ENCODE measurements at regions of chr1 and their contacts with region 1.

Region 1: DNA sequence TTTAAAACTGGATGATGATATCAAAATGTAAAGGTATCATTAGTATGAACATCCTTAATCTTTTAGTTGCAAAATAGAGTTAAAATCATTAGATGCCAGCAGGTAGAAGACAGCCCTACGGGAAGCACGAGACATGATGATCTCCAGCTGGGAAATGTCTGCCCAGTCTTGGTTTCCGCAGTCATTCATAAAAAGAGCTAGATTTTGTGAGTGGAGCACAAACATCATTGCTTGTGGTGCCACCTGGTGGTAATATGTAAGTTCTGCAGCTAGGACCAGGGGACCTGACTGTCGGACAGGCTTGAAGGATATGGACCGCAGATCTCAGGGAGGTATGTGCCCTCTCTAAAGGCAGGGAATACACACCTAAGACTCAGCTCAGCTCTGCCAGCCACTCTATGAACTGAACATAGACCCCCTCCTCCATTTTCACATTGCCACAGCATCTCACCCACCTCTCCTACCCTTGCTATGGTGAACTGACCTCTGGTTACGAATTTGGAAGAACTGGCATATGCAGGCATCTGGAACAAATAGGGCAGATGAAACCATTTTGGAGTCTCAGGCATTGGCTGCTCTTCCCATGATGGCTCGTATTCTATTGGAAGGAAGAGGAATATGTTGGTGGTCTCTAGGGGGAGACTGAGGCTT is 9.2 kb downstream of the FCMR start:
- DNase-seq: peak; percentile 59
- H3K4me3 ChIP-seq: no peak overlapping the region
- H3K27ac ChIP-seq: no peak overlapping the region
- H3K4me1 ChIP-seq: peaks cover 22% of the 10 kb centered on the region
- H3K27me3 ChIP-seq: no peaks in the 10 kb centered on the region
- CTCF ChIP-seq: peak; percentile 77 to 81

Region 2: GRCh38 chr1:206489980-206490770 is 422.4 kb before region 1 on chr1:
- CTCF ChIA-PET with region 1: no interaction called
- dilution Hi-C with region 1: no loop called
- in situ Hi-C with region 1: no loop called
- intact Hi-C with region 1: loop called (anchors 1 kb)
- DNase-seq: peak; percentile 47
- H3K4me3 ChIP-seq: no peak overlapping the region
- H3K27ac ChIP-seq: no peak overlapping the region
- H3K4me1 ChIP-seq: no peaks in the 10 kb centered on the region
- H3K27me3 ChIP-seq: no peaks in the 10 kb centered on the region
- CTCF ChIP-seq: peak; percentile 94 to 100

Region 3: GRCh38 chr1:206725109-206725963 is 187.2 kb before region 1 on chr1:
- CTCF ChIA-PET with region 1: no interaction called
- dilution Hi-C with region 1: loop called (anchors 5 kb)
- in situ Hi-C with region 1: loop called in 1 of 2 experiments (anchors 5 kb)
- intact Hi-C with region 1: loop called (anchors 1 kb)
- DNase-seq: no peak
- H3K4me3 ChIP-seq: no peak overlapping the region
- H3K27ac ChIP-seq: no peak overlapping the region
- H3K4me1 ChIP-seq: peaks cover 19% of the 10 kb centered on the region
- H3K27me3 ChIP-seq: no peaks in the 10 kb centered on the region
- CTCF ChIP-seq: peak; percentile 62 to 68

Region 4: DNA sequence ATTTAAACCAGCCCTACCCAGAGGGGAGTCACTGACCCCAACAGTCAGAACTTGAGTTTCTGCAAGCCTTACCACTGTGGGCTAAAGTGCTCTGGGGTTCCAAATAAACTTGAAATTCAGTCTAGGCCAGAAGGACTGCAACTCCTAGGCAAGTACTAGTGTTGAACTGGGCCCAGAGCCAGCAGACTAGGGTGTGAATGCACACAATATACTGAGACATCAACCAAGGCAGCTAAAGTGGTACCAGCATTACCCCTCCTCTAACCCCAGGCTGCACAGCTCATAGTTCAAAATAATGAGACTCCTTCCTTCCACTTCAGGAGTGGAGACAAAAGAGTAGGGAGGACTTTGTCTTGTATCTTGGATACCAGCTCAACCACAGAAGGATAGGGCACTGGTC is 66.1 kb before region 1 on chr1:
- CTCF ChIA-PET with region 1: no interaction called
- dilution Hi-C with region 1: no loop called
- in situ Hi-C with region 1: no loop called
- intact Hi-C with region 1: no loop called
- DNase-seq: no peak
- H3K4me3 ChIP-seq: no peak overlapping the region
- H3K27ac ChIP-seq: no peak overlapping the region
- H3K4me1 ChIP-seq: peaks cover 13% of the 10 kb centered on the region
- H3K27me3 ChIP-seq: no peaks in the 10 kb centered on the region
- CTCF ChIP-seq: no peak

Region 5: DNA sequence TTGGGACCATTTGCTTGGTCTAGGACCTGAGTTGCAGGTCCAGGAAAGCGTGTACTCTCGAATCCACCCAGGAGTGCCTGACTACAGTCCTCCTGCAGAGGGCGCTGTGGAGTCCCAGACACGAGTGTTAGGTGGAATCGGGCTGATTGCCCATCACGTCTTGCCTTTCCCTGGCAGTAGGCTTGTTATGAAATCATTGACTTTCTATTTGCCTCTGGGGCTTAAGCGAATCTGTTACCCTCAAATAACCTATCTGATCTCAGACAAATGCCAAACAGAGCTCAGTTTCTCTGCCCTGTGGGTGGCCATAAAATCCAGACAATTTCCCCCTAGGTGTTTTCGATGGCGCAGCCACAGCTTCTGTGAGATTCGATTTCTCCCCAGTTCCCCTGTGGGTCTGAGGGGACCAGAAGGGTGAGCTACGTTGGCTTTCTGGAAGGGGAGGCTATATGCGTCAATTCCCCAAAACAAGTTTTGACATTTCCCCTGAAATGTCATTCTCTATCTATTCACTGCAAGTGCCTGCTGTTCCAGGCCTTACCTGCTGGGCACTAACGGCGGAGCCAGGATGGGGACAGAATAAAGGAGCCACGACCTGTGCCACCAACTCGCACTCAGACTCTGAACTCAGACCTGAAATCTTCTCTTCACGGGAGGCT is 47.4 kb before region 1 on chr1 and contains the start of gene IL20:
- CTCF ChIA-PET with region 1: interaction called, 8 read pairs
- dilution Hi-C with region 1: loop called (anchors 5 kb)
- in situ Hi-C with region 1: loop called in 1 of 2 experiments (anchors 5 kb)
- intact Hi-C with region 1: loop called (anchors 1 kb)
- DNase-seq: peak; percentile 78
- H3K4me3 ChIP-seq: no peak within 1 kb of the TSS
- H3K27ac ChIP-seq: no peak within 1 kb of the TSS
- H3K4me1 ChIP-seq: peaks cover 34% of the 10 kb centered on the region
- H3K27me3 ChIP-seq: no peaks in the 10 kb centered on the region
- CTCF ChIP-seq: peak; percentile 98 to 99
- total RNA-seq, gene IL20: not detected

Region 6: DNA sequence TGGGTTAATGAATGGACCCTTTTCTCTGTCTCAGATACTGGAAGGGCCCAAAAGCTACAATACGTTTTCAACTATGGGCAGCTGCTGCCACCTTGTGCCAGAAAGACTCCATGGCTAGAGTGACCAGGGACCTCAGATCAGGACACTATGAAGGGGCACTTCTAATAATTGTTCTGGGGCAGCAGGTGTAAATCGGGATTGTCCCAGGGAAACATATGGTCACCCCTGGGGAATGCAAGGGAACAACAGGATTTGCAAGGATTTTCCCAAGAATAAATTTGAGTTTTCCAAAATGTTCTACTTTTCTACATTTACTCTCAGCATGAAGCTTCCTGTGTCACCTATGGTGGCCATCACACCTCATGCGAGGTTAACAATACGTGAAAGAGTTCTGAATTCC is 69.6 kb after region 1 on chr1:
- CTCF ChIA-PET with region 1: interaction called, 4 read pairs
- dilution Hi-C with region 1: no loop called
- in situ Hi-C with region 1: loop called in 1 of 2 experiments (anchors 5 kb)
- intact Hi-C with region 1: loop called (anchors 1 kb)
- DNase-seq: peak; percentile 33
- H3K4me3 ChIP-seq: no peak overlapping the region
- H3K27ac ChIP-seq: no peak overlapping the region
- H3K4me1 ChIP-seq: no peaks in the 10 kb centered on the region
- H3K27me3 ChIP-seq: no peaks in the 10 kb centered on the region
- CTCF ChIP-seq: peak; percentile 82 to 83

Region 7: DNA sequence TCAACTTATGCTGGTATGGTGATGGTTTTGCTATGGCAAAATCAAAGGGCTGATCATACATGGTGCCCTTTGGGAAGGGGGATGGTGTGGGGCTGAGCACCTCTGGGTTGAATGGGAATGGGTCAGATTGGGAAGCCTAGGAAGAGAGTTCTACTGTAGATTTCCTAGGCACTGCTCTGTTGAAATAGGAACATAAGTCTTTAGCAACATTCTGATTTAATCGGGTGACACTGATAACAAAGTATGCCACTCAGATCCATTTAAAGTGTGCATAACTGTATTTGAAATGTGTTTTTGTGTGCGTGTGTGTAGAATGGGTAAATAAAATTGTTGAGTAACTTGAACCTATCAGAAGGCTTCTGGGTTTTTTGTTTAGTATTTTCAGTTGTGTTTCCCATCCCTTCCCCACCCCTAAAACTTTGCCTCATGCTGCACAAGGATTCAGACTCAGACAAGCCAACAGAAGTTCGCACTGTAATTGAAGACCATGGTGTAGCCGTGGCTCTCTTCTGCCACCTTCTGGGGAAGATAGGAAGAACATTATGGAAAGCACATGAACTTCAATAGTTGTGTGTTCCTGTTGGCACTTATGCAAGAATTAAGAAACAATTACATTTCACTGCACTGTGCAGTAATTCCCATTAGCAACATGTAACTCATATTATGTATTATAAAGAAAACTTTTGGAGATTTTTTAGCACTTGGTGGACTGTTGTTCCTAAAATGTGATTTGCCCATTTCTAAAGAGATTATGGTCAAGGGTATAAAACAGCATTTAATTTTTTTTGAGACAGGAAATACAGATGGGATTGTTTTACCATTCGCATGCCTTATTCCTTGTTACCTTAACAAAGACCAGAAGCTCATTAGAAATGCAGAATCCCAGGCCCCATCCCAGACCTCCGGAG is 165.2 kb after region 1 on chr1:
- CTCF ChIA-PET with region 1: no interaction called
- dilution Hi-C with region 1: loop called (anchors 5 kb)
- in situ Hi-C with region 1: loop called in 1 of 2 experiments (anchors 5 kb)
- intact Hi-C with region 1: loop called (anchors 1 kb)
- DNase-seq: peak; percentile 75
- H3K4me3 ChIP-seq: no peak overlapping the region
- H3K27ac ChIP-seq: no peak overlapping the region
- H3K4me1 ChIP-seq: peaks cover 44% of the 10 kb centered on the region
- H3K27me3 ChIP-seq: no peaks in the 10 kb centered on the region
- CTCF ChIP-seq: peak; percentile 91 to 94